Keratinocyte (primary cell): ENCODE measurements at regions of chr16 and their contacts with region 1.

Region 1: GRCh38 chr16:24800586-24800985 is 45.2 kb upstream of the SLC5A11 start:
- DNase-seq: peak; percentile 15
- H3K4me3 ChIP-seq: no peak overlapping the region
- H3K27ac ChIP-seq: no peak overlapping the region
- H3K4me1 ChIP-seq: peaks cover 8% of the 10 kb centered on the region
- H3K27me3 ChIP-seq: no peaks in the 10 kb centered on the region
- CTCF ChIP-seq: peak; percentile 52 to 65 (median 58)

Region 2: GRCh38 chr16:24906199-24907020 is 105.8 kb after region 1 on chr16:
- dilution Hi-C with region 1: loop called (anchors 25 kb)
- DNase-seq: no peak
- H3K4me3 ChIP-seq: no peak overlapping the region
- H3K27ac ChIP-seq: no peak overlapping the region
- H3K4me1 ChIP-seq: no peaks in the 10 kb centered on the region
- H3K27me3 ChIP-seq: no peaks in the 10 kb centered on the region
- CTCF ChIP-seq: peak in 2 of 3 experiments; percentile 23 to 42